ENCODE measurements at regions of chr19 and their contacts with region 1.

Region 1: GRCh38 chr19:13861732-13862531 is 15.0 kb upstream of the NANOS3 start:
- DNase-seq: peak; percentile 93
- CTCF ChIP-seq: peak; percentile 97

Region 2: GRCh38 chr19:13597640-13598039 is 264.3 kb before region 1 on chr19:
- CTCF ChIA-PET with region 1: interaction called, 14 read pairs
- POLR2A ChIA-PET with region 1: no interaction called
- DNase-seq: peak; percentile 86
- CTCF ChIP-seq: peak; percentile 57

Region 3: GRCh38 chr19:13764101-13764807 is 97.7 kb before region 1 on chr19 and contains the start of gene MRI1:
- CTCF ChIA-PET with region 1: no interaction called
- POLR2A ChIA-PET with region 1: no interaction called
- DNase-seq: peak; percentile 90
- CTCF ChIP-seq: no peak

Region 4: DNA sequence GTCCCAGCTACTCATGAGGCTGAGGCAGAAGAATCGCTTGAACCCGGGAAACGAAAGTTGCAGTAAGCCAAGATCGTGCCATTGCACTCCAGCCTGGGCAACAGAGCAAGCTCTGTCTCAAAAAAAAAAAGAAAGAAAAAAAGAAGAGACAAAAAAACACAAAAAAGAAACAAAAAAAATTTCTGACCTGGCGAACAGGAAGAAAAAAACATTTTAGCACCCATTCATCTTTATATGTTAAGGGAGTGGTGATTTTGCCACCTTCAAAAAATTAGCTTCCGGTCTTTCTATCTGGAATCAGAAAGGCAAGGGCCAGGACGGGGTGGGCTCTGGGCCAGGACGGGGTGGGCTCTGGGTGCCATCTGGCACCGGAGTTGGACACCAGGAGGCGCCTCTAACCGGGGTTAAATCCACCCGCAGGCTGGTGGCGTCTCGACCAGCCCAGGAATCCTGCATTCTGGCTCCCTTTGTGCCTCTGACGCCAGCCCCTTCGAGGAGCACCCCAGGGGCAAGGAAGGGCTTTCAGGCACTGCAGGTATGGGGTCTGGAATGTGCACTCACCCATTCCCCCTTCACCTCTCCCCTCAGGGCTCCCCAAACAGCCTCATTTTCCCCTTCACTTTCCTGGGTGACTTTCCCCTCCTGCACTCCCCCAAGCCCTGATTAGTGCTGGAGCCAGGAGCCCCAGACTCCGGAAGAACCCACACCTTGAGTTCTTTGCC is 77.0 kb before region 1 on chr19:
- CTCF ChIA-PET with region 1: interaction called, 78 read pairs
- POLR2A ChIA-PET with region 1: no interaction called
- DNase-seq: peak; percentile 68
- CTCF ChIP-seq: peak; percentile 57

Region 5: DNA sequence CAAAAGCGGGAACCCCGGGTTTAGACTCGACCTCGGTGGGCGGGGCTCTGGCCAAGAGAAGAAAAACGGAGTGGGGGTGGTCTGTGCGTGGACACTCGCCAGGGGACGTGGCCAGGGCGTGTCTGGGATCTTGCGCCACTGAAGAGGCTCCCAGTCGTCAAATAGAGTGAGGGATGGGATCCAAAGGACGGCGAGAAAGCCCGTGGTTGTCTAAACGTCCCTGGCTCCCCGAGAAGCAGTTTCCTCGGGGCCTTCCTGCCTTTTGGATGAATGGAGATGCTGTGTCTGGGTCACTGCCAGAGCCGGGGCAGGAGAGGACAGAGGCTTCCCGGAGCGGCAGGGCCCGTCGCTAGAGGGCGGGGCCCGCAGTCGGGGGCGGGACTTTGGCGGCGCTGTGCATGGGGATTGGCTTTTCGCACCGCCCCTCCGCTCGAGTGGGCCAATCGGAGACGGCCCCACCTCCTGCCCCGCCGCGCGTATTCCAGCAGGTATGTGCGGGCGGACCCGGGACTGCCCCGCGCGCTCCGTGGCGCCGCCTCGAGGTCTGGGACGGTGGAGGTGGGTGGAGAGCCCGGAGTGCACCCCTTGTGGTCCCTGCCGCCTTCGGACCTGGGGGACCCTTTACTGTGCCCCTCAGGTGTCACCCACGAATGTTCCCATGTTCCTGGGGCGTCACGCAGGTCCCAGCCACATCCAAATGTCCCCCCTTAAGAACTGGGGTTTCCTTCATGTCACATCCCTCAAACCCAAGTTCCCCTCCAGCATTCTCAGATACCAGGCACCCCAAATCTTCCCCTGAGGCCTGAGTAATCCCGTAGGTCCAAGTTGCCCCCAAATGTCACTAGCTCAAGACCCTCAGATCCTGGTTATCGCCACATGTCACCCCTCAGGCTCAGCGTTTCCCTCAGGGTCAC is 28.3 kb before region 1 on chr19:
- CTCF ChIA-PET with region 1: interaction called, 35 read pairs
- POLR2A ChIA-PET with region 1: interaction called, 21 read pairs
- DNase-seq: peak; percentile 98
- CTCF ChIP-seq: peak; percentile 66

Region 6: DNA sequence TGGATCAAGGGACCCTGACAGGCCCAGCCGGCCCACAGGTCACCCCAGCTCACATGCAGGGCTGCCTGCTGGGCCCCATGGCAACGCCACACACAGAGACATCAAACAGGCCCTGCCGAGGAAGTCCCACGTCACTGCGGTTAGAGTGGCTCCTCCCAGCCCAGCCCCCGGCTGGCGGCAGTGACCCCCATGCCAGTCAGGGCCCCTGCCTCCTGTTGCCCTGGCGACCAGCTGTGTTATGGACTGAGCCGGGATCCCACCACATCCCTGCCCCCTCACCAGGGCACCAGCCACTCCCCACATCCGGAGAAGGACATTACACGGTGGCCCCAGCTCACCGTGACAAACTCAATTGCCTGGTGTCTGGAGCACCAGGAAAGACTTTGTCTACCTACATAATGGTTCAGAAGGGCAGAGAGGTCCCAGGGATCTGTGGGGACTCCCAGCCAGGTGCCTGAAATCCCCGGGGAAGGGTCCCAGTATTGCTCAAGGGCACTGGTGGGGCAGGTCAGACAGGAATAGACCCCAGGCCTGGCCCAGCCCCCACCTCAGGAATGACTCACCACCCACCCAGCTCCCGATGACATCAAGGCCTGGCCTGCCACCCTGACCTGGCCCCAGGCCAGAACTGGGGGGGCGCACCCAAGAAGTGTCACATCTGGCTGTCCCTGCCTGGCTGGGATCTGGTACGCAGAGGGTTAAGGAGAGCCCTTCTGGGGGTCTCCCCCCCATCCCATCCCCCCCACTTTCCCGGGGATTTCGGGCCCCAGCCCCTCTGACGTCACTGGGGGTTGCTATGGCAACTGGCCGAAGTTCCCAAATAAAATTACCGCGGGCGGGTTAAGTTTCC is 15.2 kb before region 1 on chr19:
- CTCF ChIA-PET with region 1: interaction called, 90 read pairs
- POLR2A ChIA-PET with region 1: interaction called, 37 read pairs
- DNase-seq: peak; percentile 92
- CTCF ChIP-seq: no peak

Region 7: DNA sequence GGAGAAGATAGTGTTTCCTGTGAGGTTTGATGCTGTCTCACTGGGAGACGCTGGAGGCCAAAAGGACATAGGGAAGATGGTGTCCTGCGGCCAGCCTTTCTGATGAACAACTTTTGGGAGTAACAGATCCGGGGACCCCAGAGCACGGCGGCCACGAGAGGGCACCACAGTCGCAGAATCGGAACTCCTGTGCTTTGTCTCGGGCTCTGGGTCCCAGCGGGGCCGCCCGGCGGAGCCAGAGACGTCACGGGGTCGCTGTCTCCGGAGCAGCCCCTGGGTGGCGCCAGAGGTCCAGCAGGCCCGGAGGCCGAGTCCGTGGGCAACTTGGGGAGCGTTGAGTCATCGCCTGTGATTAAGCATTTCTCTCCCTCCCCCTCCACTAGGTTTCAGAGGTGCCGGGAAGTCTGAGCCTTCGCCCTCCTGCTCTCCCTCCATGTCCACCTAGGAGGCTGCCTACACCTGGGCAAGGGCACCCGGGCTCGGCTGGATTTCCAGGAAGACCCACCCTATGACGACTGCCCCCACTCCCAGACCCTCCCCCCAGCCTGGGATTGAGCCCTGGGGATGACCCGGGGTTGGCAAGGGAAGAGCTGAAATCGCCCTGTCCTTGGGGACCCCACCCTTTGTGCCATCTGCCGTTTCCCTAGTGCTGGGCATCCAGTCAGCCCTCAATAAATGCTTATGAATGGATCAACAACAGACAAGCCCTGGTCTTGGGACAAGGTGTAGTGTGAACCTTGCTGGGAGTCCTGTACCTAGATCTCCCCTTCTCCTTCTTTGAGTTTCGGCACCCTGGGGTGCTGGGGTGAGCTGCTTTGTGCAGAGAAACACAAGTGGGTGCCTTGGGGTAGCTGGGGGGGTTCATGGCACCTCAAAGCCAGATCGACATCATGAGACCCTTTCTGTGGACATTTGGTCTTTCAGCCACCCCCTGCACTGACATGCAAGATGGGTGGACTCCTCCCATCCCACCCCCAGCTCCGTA is 18.4 kb after region 1 on chr19:
- CTCF ChIA-PET with region 1: interaction called, 10 read pairs
- POLR2A ChIA-PET with region 1: no interaction called
- DNase-seq: peak; percentile 98
- CTCF ChIP-seq: peak; percentile 95

Region 8: GRCh38 chr19:13974073-13974472 is 112.1 kb after region 1 on chr19:
- CTCF ChIA-PET with region 1: no interaction called
- POLR2A ChIA-PET with region 1: no interaction called
- DNase-seq: no peak
- CTCF ChIP-seq: no peak

Measured in GM10248 (cell line).